IMR-90 (cell line): ENCODE measurements at regions of chr10 and their contacts with region 1.

Region 1: GRCh38 chr10:73886085-73886529 is 11.8 kb upstream of the CAMK2G start:
- DNase-seq: peak; percentile 82
- ATAC-seq: peak; percentile 77
- H3K4me3 ChIP-seq: no peak overlapping the region
- H3K27ac ChIP-seq: peak overlapping the region; percentile 88; the same call in 1 of the 2 replicates
- H3K4me1 ChIP-seq: peaks cover 26% of the 10 kb centered on the region
- H3K27me3 ChIP-seq: no peaks in the 10 kb centered on the region
- CTCF ChIP-seq: peak; percentile 93
- POLR2A ChIP-seq: no peak
- RAD21 ChIP-seq: peak; percentile 98

Region 2: DNA sequence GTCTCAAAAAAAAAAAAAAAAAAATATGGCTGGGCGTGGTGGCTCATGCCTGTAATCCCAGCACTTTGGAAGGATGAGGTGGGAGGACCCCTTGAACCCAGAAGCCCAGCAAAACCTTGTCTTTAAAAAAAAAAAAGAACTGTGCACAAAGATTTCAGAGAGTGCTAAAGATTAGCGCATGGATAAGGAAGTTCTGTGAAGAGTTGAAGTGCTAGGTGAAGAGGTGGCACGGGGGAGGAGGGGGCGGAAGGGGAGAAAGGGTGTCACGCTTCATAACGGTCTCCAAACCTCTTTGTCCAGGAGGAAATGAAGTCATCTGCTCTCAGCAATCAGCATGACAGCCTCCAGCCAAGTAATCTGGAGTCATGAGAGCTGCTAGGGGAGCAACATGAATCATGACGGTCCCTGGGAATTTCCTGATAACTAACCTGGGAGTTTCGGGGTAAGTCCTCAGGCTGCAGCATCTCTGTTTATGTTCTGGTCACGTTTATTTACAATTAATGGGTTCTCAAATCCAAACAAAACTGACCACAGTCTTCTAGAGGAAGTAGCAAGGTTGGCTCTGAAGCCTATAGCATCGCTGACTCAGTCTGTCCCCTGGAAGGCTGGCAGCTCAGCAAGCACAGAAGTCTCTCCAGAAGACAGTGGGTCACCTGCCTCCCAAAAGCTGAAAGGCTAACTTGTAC is 22.9 kb after region 1 on chr10:
- CTCF ChIA-PET with region 1: interaction called, 5 read pairs
- POLR2A ChIA-PET with region 1: interaction called, 34 read pairs
- dilution Hi-C with region 1: no loop called
- in situ Hi-C with region 1: no loop called
- intact Hi-C with region 1: loop called (anchors 1 kb)
- DNase-seq: peak; percentile 100
- ATAC-seq: peak; percentile 24
- H3K4me3 ChIP-seq: no peak overlapping the region
- H3K27ac ChIP-seq: peak overlapping the region; percentile 91
- H3K4me1 ChIP-seq: peaks cover 38% of the 10 kb centered on the region
- H3K27me3 ChIP-seq: no peaks in the 10 kb centered on the region
- CTCF ChIP-seq: no peak
- POLR2A ChIP-seq: peak; percentile 85
- RAD21 ChIP-seq: peak; percentile 26

Region 3: DNA sequence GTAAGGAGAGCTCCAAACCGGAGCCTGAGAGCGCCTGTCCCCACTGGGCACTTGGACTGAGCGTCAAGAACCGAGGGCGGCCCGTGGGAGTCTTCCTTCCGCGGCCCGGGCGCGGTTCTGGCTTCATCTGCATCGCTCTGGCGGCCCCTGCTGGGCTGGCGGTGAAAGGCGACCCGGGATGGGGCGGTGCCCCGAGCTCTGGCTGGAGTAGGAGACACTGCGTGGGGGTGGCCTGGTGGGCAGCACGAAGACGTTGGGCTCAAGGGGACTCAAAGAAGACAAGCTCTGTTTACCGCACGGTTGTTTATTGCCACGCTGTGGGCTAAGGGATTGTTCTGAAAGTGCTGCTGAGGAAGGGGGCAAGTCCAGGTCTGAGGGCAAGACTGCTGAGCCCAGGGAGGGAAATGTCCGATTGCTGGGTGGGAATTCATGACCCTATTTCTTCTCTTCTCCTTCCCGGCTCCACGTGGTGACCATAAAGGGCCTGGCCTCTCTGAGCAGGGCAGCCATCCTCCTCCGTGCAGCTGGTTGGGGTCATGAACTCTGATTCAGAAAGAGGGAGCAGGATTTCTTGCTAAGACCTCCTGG is 54.6 kb after region 1 on chr10:
- CTCF ChIA-PET with region 1: interaction called, 38 read pairs
- POLR2A ChIA-PET with region 1: interaction called, 5 read pairs
- dilution Hi-C with region 1: no loop called
- in situ Hi-C with region 1: loop called (anchors 5 kb)
- intact Hi-C with region 1: loop called (anchors 1 kb)
- DNase-seq: peak; percentile 49
- ATAC-seq: peak; percentile 97
- H3K4me3 ChIP-seq: no peak overlapping the region
- H3K27ac ChIP-seq: peak overlapping the region; percentile 54
- H3K4me1 ChIP-seq: peaks cover 13% of the 10 kb centered on the region
- H3K27me3 ChIP-seq: no peaks in the 10 kb centered on the region
- CTCF ChIP-seq: peak; percentile 84
- POLR2A ChIP-seq: no peak
- RAD21 ChIP-seq: peak; percentile 92

Region 4: DNA sequence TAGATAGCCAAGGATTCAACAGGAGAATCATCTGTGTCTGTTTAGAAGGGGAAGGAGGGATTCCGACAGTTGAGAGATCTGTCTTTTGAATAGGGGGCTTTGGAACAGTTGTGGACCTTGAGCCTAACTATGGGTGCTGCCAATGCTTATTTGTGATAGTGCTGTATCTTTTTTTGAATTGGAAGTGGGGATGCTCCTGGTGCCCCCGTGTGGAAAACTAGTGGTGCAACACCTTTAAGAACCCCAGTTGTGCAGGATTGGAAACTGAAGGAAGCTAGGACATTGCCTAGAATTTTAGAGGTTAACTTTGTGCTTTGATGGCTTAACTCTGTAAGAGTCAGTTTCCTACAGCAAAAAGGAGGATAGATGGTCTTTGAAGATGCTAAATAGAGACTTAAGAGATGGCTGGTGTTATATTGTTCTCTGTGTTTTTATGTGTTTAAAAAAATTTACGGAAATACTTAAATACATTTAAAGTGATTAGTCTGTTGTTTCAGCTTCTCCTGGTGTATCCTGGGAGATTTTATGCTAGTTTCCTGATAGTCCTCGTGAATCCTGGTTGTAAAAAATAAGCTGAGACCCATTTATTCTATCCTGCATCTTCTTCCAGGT is 195.2 kb after region 1 on chr10:
- CTCF ChIA-PET with region 1: interaction called, 5 read pairs
- POLR2A ChIA-PET with region 1: no interaction called
- dilution Hi-C with region 1: no loop called
- in situ Hi-C with region 1: loop called (anchors 5 kb)
- intact Hi-C with region 1: loop called (anchors 1 kb)
- DNase-seq: peak; percentile 57
- ATAC-seq: peak; percentile 63
- H3K4me3 ChIP-seq: no peak overlapping the region
- H3K27ac ChIP-seq: no peak overlapping the region
- H3K4me1 ChIP-seq: peaks cover 7% of the 10 kb centered on the region
- H3K27me3 ChIP-seq: no peaks in the 10 kb centered on the region
- CTCF ChIP-seq: peak; percentile 69
- POLR2A ChIP-seq: no peak
- RAD21 ChIP-seq: peak; percentile 75

Region 5: DNA sequence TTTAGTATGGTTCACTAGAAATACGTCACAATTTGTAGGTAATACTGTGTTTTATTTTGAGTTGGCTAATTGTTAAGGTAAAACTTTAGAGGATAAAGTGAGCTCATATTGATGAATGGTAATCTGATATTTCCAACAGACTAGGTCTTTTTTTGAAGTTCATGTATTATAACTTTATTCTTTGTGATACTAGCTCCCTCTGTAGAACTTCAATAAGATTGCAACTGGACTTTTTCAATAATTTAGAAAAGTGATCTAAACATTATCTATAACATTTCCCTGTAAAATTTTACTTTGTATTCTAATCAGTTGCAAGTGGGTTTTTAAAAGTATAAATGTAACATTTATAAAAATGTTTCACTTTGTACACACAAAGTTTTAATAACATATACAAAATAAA is 348.5 kb after region 1 on chr10:
- CTCF ChIA-PET with region 1: interaction called, 3 read pairs
- POLR2A ChIA-PET with region 1: no interaction called
- dilution Hi-C with region 1: no loop called
- in situ Hi-C with region 1: no loop called
- intact Hi-C with region 1: loop called (anchors 2 kb)
- DNase-seq: peak; percentile 33
- ATAC-seq: peak; percentile 49; the same call in 1 of the 2 replicates
- H3K4me3 ChIP-seq: no peak overlapping the region
- H3K27ac ChIP-seq: no peak overlapping the region
- H3K4me1 ChIP-seq: no peaks in the 10 kb centered on the region
- H3K27me3 ChIP-seq: no peaks in the 10 kb centered on the region
- CTCF ChIP-seq: peak; percentile 56
- POLR2A ChIP-seq: no peak
- RAD21 ChIP-seq: peak; percentile 52

Region 6: DNA sequence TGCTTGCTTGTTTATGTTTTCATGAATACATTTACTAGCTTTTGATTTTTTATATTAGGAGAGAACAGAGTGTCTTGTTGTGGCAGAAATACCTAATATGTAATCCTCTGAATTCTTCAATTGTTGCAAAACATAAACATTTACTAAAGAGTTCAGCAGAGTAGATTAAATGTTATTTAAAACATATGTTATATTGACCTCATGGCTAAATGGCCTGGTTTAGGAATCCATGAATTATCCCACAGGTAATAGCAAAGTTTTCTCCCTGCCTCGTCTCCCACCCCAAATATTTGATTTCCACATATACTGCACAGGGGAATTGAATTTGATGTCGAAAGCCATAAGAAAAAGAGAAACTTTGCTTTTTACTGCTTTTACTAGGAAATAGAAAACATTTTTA is 376.7 kb after region 1 on chr10:
- CTCF ChIA-PET with region 1: no interaction called
- POLR2A ChIA-PET with region 1: no interaction called
- dilution Hi-C with region 1: no loop called
- in situ Hi-C with region 1: no loop called
- intact Hi-C with region 1: no loop called
- DNase-seq: no peak
- ATAC-seq: no peak
- H3K4me3 ChIP-seq: no peak overlapping the region
- H3K27ac ChIP-seq: no peak overlapping the region
- H3K4me1 ChIP-seq: peaks cover 2% of the 10 kb centered on the region; the same call in 1 of the 2 replicates
- H3K27me3 ChIP-seq: no peaks in the 10 kb centered on the region
- CTCF ChIP-seq: no peak
- POLR2A ChIP-seq: no peak
- RAD21 ChIP-seq: no peak